PC-9 (cell line): ENCODE measurements at regions of chr2 and their contacts with region 1.

Region 1: GRCh38 chr2:20242060-20243006 is 17.4 kb upstream of the SDC1 start:
- DNase-seq: no peak
- H3K4me3 ChIP-seq: no peak overlapping the region
- H3K27ac ChIP-seq: no peak overlapping the region
- H3K4me1 ChIP-seq: no peaks in the 10 kb centered on the region
- H3K27me3 ChIP-seq: no peaks in the 10 kb centered on the region
- CTCF ChIP-seq: no peak

Region 2: DNA sequence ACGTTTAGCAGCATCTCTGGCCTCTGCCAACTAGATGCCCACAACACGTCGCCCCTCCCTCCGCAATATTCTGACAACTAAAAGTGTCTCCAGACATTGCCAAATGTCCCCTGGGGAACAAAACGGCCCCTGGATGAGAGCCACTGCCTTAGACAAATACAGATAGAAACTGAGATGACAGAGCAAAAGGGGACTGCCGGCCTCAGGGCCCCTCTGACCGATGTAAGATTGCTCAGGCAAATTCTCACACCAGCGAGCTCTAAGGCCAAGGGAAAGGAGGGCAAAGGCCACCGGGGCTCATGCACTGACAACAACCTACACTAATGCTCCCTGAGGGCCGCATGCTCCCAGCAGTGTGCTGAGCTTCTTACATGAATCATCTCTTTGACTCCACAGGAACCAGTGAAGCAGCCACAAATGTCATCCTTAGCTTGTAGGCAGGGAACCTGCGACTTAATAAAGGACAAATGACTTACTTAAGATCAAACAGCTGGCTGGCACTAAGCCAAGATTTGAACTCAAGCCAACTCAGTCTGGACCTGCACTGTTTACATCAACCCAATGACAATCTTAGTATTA is 569.0 kb before region 1 on chr2:
- CTCF ChIA-PET with region 1: no interaction called
- POLR2A ChIA-PET with region 1: no interaction called
- intact Hi-C with region 1: no loop called
- DNase-seq: peak; percentile 10 to 67
- H3K4me3 ChIP-seq: no peak overlapping the region
- H3K27ac ChIP-seq: peak overlapping the region; percentile 0; the same call in 1 of the 2 replicates
- H3K4me1 ChIP-seq: peaks cover 31% of the 10 kb centered on the region
- H3K27me3 ChIP-seq: no peaks in the 10 kb centered on the region
- CTCF ChIP-seq: no peak

Region 3: DNA sequence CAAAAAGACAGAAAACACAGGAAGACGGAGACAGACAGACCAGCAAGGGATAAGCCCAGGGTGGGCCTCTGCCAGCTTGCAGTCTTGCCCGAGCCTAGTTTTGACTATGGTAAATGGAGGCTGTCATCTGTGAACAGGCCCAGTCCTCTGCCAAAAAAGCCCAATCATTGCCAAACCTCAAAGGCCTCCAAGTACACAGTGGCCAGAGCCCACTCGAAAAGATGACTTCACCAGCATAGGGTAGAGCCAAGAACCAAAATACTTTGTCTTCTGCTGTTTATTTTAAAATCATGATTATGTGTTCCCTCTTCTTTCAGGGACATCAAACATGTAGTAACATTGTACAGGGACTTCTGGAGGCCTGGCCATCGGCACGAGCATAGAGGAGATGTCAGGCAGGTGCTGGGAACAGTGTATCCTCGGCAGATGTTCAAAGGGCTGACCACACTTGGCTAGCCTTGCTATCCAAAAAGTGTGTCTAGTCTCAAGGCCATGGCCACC is 406.5 kb before region 1 on chr2:
- CTCF ChIA-PET with region 1: interaction called, 14 read pairs
- POLR2A ChIA-PET with region 1: no interaction called
- intact Hi-C with region 1: no loop called
- DNase-seq: no peak
- H3K4me3 ChIP-seq: no peak overlapping the region
- H3K27ac ChIP-seq: no peak overlapping the region
- H3K4me1 ChIP-seq: no peaks in the 10 kb centered on the region
- H3K27me3 ChIP-seq: no peaks in the 10 kb centered on the region
- CTCF ChIP-seq: no peak

Region 4: GRCh38 chr2:20212459-20212870 is 29.9 kb before region 1 on chr2:
- CTCF ChIA-PET with region 1: no interaction called
- POLR2A ChIA-PET with region 1: no interaction called
- intact Hi-C with region 1: no loop called
- DNase-seq: no peak
- H3K4me3 ChIP-seq: no peak overlapping the region
- H3K27ac ChIP-seq: no peak overlapping the region
- H3K4me1 ChIP-seq: peaks cover 20% of the 10 kb centered on the region
- H3K27me3 ChIP-seq: no peaks in the 10 kb centered on the region
- CTCF ChIP-seq: no peak